ENCODE measurements at regions of chr14 and their contacts with region 1.

Region 1: DNA sequence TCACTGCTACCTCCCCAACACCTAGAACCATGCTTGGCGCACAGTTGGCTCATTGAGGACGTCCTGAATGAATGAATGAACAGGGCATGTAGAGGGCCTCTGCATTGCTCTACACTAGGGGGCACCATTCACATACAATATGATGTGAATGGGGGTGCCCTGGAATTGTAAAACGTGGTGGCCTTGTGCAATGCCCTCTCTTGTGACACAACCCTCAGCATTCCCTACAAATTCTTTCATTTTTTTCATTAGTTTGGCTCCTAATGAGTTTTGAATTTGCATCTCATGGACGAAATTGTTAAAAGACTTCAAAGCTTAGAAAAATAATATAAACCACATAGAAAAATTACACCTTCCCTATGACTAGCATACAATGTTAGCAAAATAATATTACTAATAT is 2.3 kb upstream of the DIO2 start:
- DNase-seq: no peak
- H3K4me3 Mint-ChIP-seq: no peak overlapping the region
- H3K27ac Mint-ChIP-seq: no peak overlapping the region
- H3K4me1 Mint-ChIP-seq: no peaks in the 10 kb centered on the region
- H3K27me3 Mint-ChIP-seq: no peaks in the 10 kb centered on the region

Region 2: GRCh38 chr14:80607430-80608190 is 394.0 kb after region 1 on chr14:
- intact Hi-C with region 1: no loop called
- DNase-seq: no peak
- H3K4me3 Mint-ChIP-seq: no peak overlapping the region
- H3K27ac Mint-ChIP-seq: no peak overlapping the region
- H3K4me1 Mint-ChIP-seq: no peaks in the 10 kb centered on the region
- H3K27me3 Mint-ChIP-seq: no peaks in the 10 kb centered on the region

Region 3: GRCh38 chr14:80850197-80850814 is 636.7 kb after region 1 on chr14:
- intact Hi-C with region 1: loop called (anchors 5 kb)
- DNase-seq: no peak
- H3K4me3 Mint-ChIP-seq: no peak overlapping the region
- H3K27ac Mint-ChIP-seq: no peak overlapping the region
- H3K4me1 Mint-ChIP-seq: no peaks in the 10 kb centered on the region
- H3K27me3 Mint-ChIP-seq: peaks cover 2% of the 10 kb centered on the region

Measured in activated T-helper 1 cell treated with anti-CD3 and anti-CD28 coated beads, Interleukin-12 subunit alpha, Interleukin-12 subunit beta, Interleukin-2, Interleukin-4 antibody, amounts not matched to agents 30 ng/mL and 10 ng/mL and 1 ng/mL, durations not matched to agents 14 hours and 24 hours and 36 hours (primary cell).